Common myeloid progenitor, CD34-positive (primary cell): ENCODE measurements at regions of chrX and their contacts with region 1.

Region 1: GRCh38 chrX:37825209-37825842 is 22.0 kb downstream of the DYNLT3 start:
- DNase-seq: peak; percentile 39 to 72 (median 61)
- H3K4me3 ChIP-seq: no peak overlapping the region
- H3K27ac ChIP-seq: no peak overlapping the region
- H3K4me1 ChIP-seq: peaks cover 0 to 10% (median 6%) of the 10 kb centered on the region in 4 experiments
- H3K27me3 ChIP-seq: no peaks in the 10 kb centered on the region

Region 2: GRCh38 chrX:37745354-37745753 is 80.0 kb before region 1 on chrX:
- CTCF ChIA-PET with region 1: interaction called, 152 read pairs
- POLR2A ChIA-PET with region 1: no interaction called
- DNase-seq: peak; percentile 69 to 87 (median 82)
- H3K4me3 ChIP-seq: no peak overlapping the region
- H3K27ac ChIP-seq: no peak overlapping the region
- H3K4me1 ChIP-seq: peaks cover 0 to 16% (median 8%) of the 10 kb centered on the region in 4 experiments
- H3K27me3 ChIP-seq: peaks cover 0 to 5% (median 0%) of the 10 kb centered on the region in 5 experiments

Region 3: DNA sequence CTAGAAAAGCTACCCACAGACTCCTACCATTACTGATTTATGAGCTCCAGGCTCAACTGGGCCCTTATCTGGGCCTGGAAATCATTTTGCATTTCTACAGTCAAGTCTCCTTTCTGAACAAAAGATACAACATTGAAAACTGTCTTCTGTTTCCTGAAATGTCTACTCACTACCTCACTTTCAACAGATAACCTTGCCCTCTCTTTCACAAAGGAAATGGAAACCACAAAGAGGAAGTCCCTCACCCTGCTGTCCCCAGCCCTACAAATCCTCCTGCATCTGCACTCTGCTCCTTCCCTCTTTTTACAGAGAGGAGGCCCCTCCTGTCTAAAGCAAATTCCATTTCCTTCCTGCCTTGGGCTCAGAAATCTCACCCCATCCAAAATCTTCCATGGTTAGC is 70.3 kb before region 1 on chrX:
- CTCF ChIA-PET with region 1: interaction called, 22 read pairs
- POLR2A ChIA-PET with region 1: no interaction called
- DNase-seq: peak; percentile 70 to 94 (median 89)
- H3K4me3 ChIP-seq: no peak overlapping the region
- H3K27ac ChIP-seq: peak overlapping the region in 1 of 2 experiments; percentile 51
- H3K4me1 ChIP-seq: peaks cover 18 to 38% (median 26%) of the 10 kb centered on the region in 4 experiments
- H3K27me3 ChIP-seq: no peaks in the 10 kb centered on the region